HEK293 (cell line): ENCODE measurements at regions of chr2 and their contacts with region 1.

Region 1: GRCh38 chr2:74440378-74441169 is 1.2 kb downstream of the RTKN start:
- H3K4me3 ChIP-seq: peak overlapping the region; percentile 56
- H3K27ac ChIP-seq: peak overlapping the region; percentile 68
- H3K4me1 ChIP-seq: peaks cover 7% of the 10 kb centered on the region
- CTCF ChIP-seq: peak; percentile 92

Region 2: DNA sequence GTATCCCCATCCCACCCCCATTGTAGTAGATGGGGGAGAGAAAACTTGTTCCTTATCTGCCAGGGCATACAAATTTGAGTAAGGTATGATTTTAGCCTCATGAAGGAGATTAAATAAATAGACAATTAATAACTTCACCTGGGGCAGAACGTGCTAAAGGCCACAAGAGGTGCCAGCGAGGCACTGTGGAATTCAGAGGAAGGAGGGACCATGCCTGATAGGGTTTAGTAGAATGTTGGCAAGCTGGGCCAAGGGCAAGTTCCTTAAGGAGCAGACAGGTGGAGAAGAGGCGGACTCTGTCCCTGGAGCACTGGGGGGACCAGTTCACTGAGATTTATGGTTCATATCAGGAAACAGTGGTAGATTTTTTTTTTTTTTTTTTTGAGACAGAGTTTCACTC is 589.3 kb before region 1 on chr2:
- CTCF ChIA-PET with region 1: no interaction called
- POLR2A ChIA-PET with region 1: no interaction called
- H3K4me3 ChIP-seq: no peak overlapping the region
- H3K27ac ChIP-seq: no peak overlapping the region
- H3K4me1 ChIP-seq: no peaks in the 10 kb centered on the region
- CTCF ChIP-seq: 0 out of 2 replicates have a peak, but pooled peaks have one; percentile 25

Region 3: DNA sequence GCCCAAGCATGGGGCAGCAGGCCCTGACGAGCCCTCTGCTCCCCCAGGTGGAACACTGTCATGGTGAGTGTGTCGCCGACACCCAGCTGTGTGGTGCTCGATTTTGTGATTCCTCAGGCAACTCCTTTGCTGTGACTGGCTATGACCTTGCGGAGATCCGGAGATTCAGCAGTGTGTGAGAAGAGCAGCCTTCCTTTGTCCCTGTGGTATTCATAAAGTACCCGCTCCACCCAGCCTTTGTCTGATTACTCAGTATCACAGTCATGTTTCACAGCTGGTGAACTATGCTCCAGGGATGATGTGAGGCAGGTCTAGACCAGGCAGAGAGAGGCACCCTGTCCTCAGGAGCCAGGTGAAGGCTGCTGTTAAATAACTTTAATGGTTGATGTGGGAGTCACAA is 15.1 kb before region 1 on chr2:
- CTCF ChIA-PET with region 1: no interaction called
- POLR2A ChIA-PET with region 1: interaction called, 17 read pairs
- H3K4me3 ChIP-seq: no peak overlapping the region
- H3K27ac ChIP-seq: no peak overlapping the region
- H3K4me1 ChIP-seq: no peaks in the 10 kb centered on the region; the same call in 1 of the 2 replicates
- CTCF ChIP-seq: no peak

Region 4: DNA sequence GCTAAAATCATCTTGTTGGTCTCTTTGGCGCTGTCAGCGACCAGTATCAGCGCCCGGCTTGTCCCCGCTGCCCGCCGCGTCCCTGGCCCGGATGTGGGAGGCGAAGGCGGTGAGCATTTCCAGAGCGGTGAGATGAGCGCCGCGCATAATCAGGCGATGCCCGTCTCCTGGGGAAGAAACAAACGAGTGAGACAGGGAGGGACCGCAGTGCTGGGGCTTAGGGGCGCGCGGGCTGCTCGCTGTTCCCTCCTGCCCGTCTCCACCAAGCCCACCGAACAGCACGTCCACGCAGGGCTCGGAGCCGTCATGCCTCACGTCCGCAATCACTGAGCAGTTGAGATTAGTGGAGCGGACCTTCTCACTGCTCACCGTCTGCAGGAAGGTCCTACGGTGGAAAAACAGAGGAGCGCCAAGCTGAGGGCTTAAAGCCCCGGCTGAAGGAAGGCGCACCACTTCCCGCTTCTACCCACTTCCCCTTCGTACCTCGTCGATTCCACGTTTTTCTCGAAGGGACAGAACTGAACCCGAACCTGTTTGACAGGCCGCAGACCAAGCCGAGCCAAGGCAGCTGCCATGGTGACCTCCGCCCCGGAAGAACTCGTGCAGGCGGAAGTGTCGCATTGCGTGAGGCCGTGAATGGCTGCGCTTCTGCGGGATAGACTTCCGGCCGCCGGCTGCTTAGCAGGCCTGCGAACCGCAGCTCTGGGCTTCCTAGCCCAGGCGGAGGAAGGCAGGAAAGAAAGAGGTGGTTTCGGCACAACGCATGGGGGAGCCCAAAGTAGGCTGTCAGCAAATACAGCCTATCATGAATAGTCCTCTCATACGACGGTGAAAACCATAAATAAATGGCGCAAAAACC is 31.7 kb after region 1 on chr2 and contains the start of gene MRPL53:
- CTCF ChIA-PET with region 1: interaction called, 3 read pairs
- POLR2A ChIA-PET with region 1: interaction called, 17 read pairs
- H3K4me3 ChIP-seq: peak within 1 kb of the TSS; percentile 55
- H3K27ac ChIP-seq: peak within 1 kb of the TSS; percentile 87
- H3K4me1 ChIP-seq: 0 out of 2 replicates have a peak, but pooled peaks cover 2% of the 10 kb centered on the region
- CTCF ChIP-seq: no peak; the same call in 1 of the 2 replicates

Region 5: DNA sequence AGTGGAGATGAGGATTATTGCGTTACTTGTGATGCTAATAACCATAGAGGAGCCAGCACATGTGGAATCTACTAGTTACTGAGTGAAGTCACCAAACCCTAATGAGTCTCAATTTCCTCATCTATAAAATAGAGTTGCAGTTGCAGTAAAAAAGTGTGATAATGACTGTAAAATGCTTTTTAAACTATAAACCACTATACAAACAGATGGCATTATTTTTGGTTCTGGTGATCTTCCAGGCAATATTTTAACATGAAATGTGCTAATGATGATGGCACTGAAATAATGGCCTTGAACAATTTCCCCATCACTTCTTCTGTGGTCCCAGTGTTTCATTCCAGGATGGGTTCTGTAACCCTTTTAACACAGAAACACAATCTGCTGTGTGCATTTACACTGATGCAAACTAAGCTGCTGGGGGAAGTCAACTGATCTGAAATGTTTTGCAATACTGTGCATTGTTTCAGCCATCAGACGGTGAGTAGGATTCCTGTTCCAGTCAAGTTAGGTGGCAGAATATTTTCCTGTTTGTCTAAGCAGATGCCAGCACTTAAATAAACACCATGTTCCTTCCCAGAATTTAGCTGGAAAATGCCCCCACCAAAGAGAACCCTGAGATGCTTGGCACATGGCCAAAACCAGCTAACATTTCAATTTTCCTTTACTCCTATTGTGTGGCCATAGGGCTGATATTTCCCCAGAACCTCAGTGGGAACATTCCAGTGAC is 706.2 kb after region 1 on chr2:
- CTCF ChIA-PET with region 1: no interaction called
- POLR2A ChIA-PET with region 1: no interaction called
- H3K4me3 ChIP-seq: no peak overlapping the region
- H3K27ac ChIP-seq: no peak overlapping the region
- H3K4me1 ChIP-seq: no peaks in the 10 kb centered on the region
- CTCF ChIP-seq: no peak